Gastrocnemius medialis (tissue), 4 donors: ENCODE measurements at regions of chr2 and their contacts with region 1.

Region 1: DNA sequence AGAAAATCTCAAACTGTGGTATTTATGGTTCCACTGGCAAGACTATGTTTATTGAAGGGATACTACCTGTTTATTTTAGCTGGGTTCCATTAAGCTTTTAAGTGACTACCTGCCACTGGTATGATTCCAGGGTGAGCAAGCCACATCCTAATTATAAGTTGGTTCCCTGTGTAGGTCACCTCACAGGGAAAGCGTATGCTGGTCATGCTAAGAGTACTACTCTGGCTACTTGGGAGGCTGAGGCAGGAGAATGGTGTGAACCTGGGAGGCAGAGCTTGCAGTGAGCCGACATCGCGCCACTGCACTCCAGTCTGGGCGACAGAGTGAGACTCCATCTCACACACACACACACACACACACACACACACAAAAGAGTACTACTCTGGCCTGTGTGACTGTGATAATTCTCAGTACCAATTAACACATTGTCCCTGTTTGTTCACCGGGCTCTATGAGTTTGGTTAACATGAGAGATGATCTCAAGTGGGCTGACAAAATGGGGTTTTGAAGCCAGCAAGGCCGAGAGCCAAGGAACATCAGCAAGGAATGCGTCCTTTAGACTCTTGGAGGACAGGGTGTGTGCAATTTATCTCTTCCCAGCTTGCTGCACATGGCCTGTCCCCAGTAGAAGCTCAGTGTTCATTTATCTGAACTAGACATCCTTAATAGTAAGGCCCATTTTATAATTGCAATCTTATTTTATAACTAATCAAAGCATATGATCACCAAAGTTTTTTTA is 15.2 kb upstream of the ITSN2 start:
- DNase-seq: peak; percentile 26 to 36
- ATAC-seq: peak; percentile 80 to 96
- H3K4me3 ChIP-seq: no peak overlapping the region
- H3K27ac ChIP-seq: peak overlapping the region in 1 of 4 donors; percentile 29
- H3K4me1 ChIP-seq: no peaks in the 10 kb centered on the region
- H3K27me3 ChIP-seq: no peaks in the 10 kb centered on the region
- CTCF ChIP-seq: no peak
- POLR2A ChIP-seq: no peak

Region 2: DNA sequence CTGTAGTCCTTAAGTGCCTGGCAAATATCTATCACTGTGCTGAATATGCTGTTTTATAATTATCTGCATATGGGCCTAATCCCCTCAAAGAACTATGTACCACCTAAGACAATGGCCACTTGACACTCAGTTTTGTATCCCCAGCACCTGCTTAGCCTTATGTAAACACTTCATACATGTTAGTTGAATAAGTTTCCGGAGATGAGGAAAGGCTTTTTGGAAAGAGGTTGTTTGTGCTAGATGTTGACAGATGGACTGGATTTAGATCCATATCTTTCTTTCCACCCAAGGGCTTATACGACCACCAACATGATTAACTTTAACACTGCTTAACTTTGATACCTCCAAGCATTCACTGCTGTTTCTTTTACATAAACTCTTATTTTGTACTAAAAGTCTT is 137.4 kb before region 1 on chr2:
- in situ Hi-C with region 1: loop called in 3 of 4 experiments (anchors 5 to 10 kb)
- intact Hi-C with region 1: no loop called
- DNase-seq: no peak
- ATAC-seq: no peak
- H3K4me3 ChIP-seq: no peak overlapping the region
- H3K27ac ChIP-seq: no peak overlapping the region
- H3K4me1 ChIP-seq: no peaks in the 10 kb centered on the region
- H3K27me3 ChIP-seq: no peaks in the 10 kb centered on the region
- CTCF ChIP-seq: no peak
- POLR2A ChIP-seq: no peak

Region 3: GRCh38 chr2:24287171-24287570 is 88.3 kb before region 1 on chr2:
- in situ Hi-C with region 1: no loop called
- intact Hi-C with region 1: no loop called
- DNase-seq: no peak
- ATAC-seq: no peak
- H3K4me3 ChIP-seq: no peak overlapping the region
- H3K27ac ChIP-seq: no peak overlapping the region
- H3K4me1 ChIP-seq: no peaks in the 10 kb centered on the region
- H3K27me3 ChIP-seq: no peaks in the 10 kb centered on the region
- CTCF ChIP-seq: no peak
- POLR2A ChIP-seq: no peak

Region 4: GRCh38 chr2:24315669-24316068 is 59.8 kb before region 1 on chr2:
- in situ Hi-C with region 1: loop called in 1 of 4 experiments (anchors 10 kb)
- intact Hi-C with region 1: no loop called
- DNase-seq: no peak
- ATAC-seq: no peak
- H3K4me3 ChIP-seq: no peak overlapping the region
- H3K27ac ChIP-seq: no peak overlapping the region
- H3K4me1 ChIP-seq: peaks cover 8 to 24% of the 10 kb centered on the region in 2 donors
- H3K27me3 ChIP-seq: no peaks in the 10 kb centered on the region
- CTCF ChIP-seq: no peak
- POLR2A ChIP-seq: no peak